A549 (cell line): ENCODE measurements at regions of chr15 and their contacts with region 1.

Region 1: DNA sequence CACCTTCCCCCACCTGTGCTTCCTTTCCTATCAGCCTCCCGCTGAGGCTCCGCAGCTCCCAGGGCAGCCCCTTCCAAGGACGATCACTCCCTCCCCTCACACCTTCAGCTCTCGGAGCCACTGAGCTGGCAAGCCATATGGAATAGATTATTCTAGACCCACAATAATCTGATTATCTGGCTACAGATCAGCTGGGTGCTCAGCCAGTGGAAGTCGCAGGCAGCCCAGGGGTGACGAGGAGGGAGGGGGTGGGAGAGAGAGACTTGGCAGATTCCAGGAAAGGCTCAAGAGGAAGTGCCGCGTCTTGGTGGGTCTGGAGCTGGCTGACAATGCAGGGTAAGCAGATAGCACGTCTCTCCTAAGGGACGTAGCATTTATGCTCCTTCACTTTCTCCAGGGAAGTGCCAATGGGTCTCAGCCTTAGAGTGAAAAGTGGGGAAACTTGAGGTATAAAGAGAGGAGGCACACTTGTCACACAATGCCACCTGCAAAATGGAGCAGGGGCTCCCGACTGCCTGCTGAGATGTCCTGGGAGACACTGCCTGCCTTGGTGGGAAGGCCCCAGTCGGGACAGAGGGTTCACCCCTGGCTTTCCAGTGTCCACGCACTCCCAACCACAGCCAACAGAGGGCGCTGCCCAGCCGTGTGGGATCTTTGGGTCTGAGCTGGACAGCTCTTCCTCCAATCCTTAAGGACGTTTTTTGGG is 9.4 kb upstream of the MESP1 start:
- DNase-seq: peak; percentile 72 to 91
- ATAC-seq: peak; percentile 93 to 97
- H3K4me3 ChIP-seq: no peak overlapping the region
- H3K27ac ChIP-seq: no peak overlapping the region
- H3K4me1 ChIP-seq: peaks cover 4% of the 10 kb centered on the region; the same call in 2 of the 3 replicates
- CTCF ChIP-seq: peak; percentile 98
- EP300 ChIP-seq: no peak
- POLR2A ChIP-seq: no peak
- RAD21 ChIP-seq: peak; percentile 97 to 98

Region 2: GRCh38 chr15:89680282-89680873 is 80.1 kb before region 1 on chr15:
- CTCF ChIA-PET with region 1: no interaction called
- POLR2A ChIA-PET with region 1: no interaction called
- DNase-seq: peak in 1 of 2 experiments; percentile 55
- ATAC-seq: peak; percentile 60 to 81
- H3K4me3 ChIP-seq: no peak overlapping the region
- H3K27ac ChIP-seq: peak overlapping the region in 1 of 2 experiments; percentile 24; a peak in 3 of 6 replicates
- H3K4me1 ChIP-seq: peaks cover 21% of the 10 kb centered on the region
- CTCF ChIP-seq: no peak
- EP300 ChIP-seq: no peak
- POLR2A ChIP-seq: no peak
- RAD21 ChIP-seq: no peak

Region 3: DNA sequence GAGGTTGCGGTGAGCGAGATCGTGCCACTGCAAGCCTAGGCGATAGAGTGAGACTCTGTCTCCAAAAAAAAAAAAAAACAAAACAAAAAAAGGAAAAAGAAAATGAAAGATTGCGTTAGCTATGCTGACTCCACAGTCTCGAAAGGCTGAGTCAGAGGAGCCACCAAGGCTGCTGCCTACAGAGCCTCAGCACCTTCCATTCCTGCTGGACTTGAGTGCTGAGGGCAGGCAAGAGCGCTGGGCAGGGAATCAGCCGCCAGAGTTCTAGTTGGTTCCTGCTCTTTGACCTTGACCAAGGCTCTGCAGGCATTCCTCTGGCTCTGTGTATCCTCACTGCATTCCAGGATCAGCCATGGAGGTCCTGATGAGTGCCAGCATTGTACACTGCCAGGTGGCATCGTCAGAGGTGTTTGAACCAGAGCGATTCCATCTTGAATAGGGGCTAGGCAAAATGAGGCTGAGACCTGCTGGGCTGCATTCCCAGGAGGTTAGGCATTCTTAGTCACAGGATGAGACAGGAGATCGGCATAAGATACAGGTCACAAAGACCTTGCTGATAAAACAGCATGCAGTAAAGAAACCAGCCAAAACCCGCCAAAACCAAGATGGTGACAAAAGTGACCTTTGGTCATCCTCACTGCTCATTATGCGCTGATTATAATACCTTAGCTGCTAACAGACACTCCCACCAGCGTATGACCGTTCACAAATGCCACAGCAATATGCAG is 21.6 kb after region 1 on chr15:
- CTCF ChIA-PET with region 1: interaction called, 222 read pairs
- POLR2A ChIA-PET with region 1: no interaction called
- DNase-seq: no peak
- ATAC-seq: peak in 1 of 2 experiments; percentile 31; a peak in 3 of 6 replicates
- H3K4me3 ChIP-seq: no peak overlapping the region
- H3K27ac ChIP-seq: peak overlapping the region; percentile 8 to 27; a peak in 3 of 6 replicates
- H3K4me1 ChIP-seq: peaks cover 37% of the 10 kb centered on the region
- CTCF ChIP-seq: no peak
- EP300 ChIP-seq: no peak
- POLR2A ChIP-seq: no peak
- RAD21 ChIP-seq: no peak

Region 4: GRCh38 chr15:89812011-89812835 is 51.8 kb after region 1 on chr15:
- CTCF ChIA-PET with region 1: interaction called, 19 read pairs
- POLR2A ChIA-PET with region 1: no interaction called
- DNase-seq: peak in 1 of 2 experiments; percentile 31
- ATAC-seq: peak; percentile 14 to 39; a peak in 5 of 6 replicates
- H3K4me3 ChIP-seq: no peak overlapping the region
- H3K27ac ChIP-seq: peak overlapping the region; percentile 39 to 42; a peak in 4 of 6 replicates
- H3K4me1 ChIP-seq: peaks cover 21% of the 10 kb centered on the region
- CTCF ChIP-seq: no peak
- EP300 ChIP-seq: no peak
- POLR2A ChIP-seq: no peak
- RAD21 ChIP-seq: no peak

Region 5: DNA sequence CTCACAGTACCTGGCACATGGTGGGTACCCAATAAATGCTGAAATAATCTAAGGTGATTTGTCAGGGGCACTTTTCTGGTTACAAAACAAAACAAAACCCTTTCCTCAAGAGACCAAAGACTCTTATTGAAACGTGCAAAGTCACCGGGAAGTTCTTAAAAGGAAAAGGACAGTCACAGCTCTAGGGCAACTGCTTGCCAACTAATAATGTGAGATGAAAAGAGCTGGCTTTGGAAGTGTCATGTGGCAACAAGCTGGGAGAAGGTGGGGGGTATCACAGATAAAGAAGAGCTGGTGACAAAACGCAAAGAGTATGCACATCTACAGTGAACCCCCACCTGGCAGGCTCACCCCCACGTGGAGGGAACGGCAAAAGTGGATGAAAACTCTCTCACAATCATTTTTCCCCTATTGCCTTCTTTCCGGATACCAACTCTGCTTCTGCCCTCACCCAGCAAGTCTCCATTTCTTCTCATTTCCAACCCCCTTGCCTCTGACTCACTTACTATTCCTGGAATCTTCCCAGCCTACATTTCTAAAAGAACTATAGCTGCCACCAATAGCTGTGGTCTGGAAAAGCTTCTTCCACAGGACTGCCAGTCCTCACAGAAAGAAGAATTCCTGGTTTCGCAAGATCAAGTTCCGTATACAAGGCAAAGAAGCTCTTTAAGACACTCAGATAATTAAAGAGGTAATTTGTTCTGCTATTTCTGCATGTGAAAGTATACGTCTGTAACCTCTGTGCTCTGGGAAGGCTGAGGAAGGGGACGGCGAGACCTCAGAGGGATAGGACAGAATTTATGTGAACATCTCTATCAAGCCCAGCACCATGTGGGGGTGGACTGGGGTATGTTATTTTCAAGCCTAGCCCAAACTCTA is 76.0 kb after region 1 on chr15:
- CTCF ChIA-PET with region 1: interaction called, 38 read pairs
- POLR2A ChIA-PET with region 1: interaction called, 3 read pairs
- DNase-seq: no peak
- ATAC-seq: peak; percentile 48 to 71; a peak in 4 of 6 replicates
- H3K4me3 ChIP-seq: no peak overlapping the region
- H3K27ac ChIP-seq: peak overlapping the region; percentile 51 to 75; a peak in 5 of 6 replicates
- H3K4me1 ChIP-seq: peaks cover 25% of the 10 kb centered on the region
- CTCF ChIP-seq: no peak
- EP300 ChIP-seq: no peak
- POLR2A ChIP-seq: no peak
- RAD21 ChIP-seq: no peak

Region 6: GRCh38 chr15:89863918-89864317 is 103.5 kb after region 1 on chr15:
- CTCF ChIA-PET with region 1: interaction called, 37 read pairs
- POLR2A ChIA-PET with region 1: no interaction called
- DNase-seq: no peak
- ATAC-seq: no peak
- H3K4me3 ChIP-seq: no peak overlapping the region
- H3K27ac ChIP-seq: no peak overlapping the region
- H3K4me1 ChIP-seq: peaks cover 2% of the 10 kb centered on the region
- CTCF ChIP-seq: no peak
- EP300 ChIP-seq: no peak
- POLR2A ChIP-seq: no peak
- RAD21 ChIP-seq: 0 out of 5 replicates have a peak, but pooled peaks of 1 of the 2 experiments have one; percentile 9

Region 7: DNA sequence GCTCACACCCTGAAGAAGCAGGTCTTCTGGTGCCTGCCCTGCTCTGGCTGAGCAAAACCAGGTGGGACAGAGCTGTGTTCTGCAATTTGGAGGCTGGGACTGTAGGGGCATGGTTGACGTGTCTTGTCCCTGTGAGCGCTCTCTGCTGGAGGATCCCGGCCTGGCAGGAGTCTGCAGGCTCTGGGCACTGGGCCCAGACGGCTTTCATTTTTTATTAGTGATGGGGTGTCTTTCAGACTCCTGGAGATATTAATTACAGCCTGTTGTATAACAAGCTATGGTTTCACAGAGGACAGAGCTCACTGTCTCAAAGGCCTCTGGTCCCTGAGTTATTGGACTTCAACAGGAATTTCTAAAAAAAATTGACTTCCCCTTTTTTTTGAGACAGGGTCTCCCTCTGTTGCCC is 211.1 kb after region 1 on chr15:
- CTCF ChIA-PET with region 1: interaction called, 11 read pairs
- POLR2A ChIA-PET with region 1: no interaction called
- DNase-seq: peak; percentile 82 to 87
- ATAC-seq: peak; percentile 100
- H3K4me3 ChIP-seq: no peak overlapping the region
- H3K27ac ChIP-seq: no peak overlapping the region
- H3K4me1 ChIP-seq: no peaks in the 10 kb centered on the region
- CTCF ChIP-seq: peak; percentile 69
- EP300 ChIP-seq: no peak
- POLR2A ChIP-seq: no peak
- RAD21 ChIP-seq: peak; percentile 48 to 65